ENCODE measurements at regions of chr9 and their contacts with region 1.

Region 1: DNA sequence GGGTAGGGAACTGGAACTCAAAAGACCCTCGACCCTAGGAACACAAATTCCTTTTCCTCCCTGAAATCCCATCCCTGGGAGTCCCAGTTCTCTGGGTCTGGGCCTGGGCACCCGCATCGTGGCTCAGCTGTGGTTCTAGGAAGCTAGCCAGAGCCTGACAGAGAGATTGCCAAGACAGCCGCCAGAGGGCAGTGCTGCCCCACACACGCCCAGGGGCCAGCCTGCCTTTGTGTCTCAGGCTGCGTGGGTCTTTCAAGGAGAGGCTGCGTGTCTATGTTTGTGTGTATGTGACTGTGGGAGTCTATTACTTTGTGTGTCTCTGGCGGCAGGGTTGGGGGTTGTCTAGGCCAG is 32.0 kb upstream of the TTLL11 start:
- DNase-seq: peak; percentile 17
- H3K4me3 ChIP-seq: no peak overlapping the region
- CTCF ChIP-seq: peak; percentile 93

Region 2: GRCh38 chr9:122092611-122093506 is 32.3 kb before region 1 on chr9 and contains the start of gene TTLL11:
- CTCF ChIA-PET with region 1: interaction called, 692 read pairs
- POLR2A ChIA-PET with region 1: no interaction called
- DNase-seq: peak; percentile 49
- H3K4me3 ChIP-seq: peak within 1 kb of the TSS; percentile 79
- CTCF ChIP-seq: no peak

Region 3: GRCh38 chr9:122144836-122145591 is 19.9 kb after region 1 on chr9:
- CTCF ChIA-PET with region 1: interaction called, 122 read pairs
- POLR2A ChIA-PET with region 1: interaction called, 4 read pairs
- DNase-seq: no peak
- H3K4me3 ChIP-seq: no peak overlapping the region
- CTCF ChIP-seq: peak; percentile 37

Region 4: DNA sequence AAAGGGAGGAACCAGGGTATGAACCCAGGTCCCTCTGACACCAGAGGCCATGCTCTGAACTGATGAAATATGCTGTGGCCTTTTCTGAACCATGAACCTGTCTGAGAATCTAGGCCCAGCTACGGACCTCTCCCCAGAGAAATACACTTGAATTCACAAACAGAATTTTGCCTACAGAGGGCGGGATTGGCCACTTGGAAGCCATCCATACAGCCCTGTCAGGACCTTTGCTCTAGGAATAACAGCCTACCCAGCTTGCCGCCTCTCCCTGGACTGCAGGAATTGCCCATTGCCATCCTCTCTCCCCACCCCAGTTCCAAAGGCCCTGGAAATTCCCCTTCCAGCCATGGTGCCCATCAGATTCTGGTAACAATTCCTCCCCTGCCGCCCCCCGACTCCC is 61.2 kb after region 1 on chr9:
- CTCF ChIA-PET with region 1: no interaction called
- POLR2A ChIA-PET with region 1: no interaction called
- DNase-seq: no peak
- H3K4me3 ChIP-seq: no peak overlapping the region
- CTCF ChIP-seq: no peak

Region 5: DNA sequence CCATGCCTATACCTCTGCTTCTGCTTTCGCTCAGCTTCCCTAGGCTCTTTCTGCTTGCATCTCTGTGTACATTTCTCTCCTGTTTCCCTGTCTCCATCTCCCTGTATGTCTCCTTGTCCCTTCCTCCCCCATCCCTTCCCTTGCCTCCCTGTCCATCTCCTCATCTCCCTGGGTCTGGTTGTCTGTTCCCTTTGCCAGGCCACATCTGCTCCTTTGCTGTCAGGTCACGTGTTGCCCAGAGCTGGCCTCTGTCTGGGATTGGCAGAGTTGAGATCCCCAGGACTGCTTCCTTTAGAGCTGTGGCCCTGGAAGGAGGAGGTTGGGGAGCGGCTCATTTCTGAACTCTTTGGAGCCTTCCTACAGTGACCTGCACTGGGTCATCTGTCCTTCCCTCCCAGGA is 213.9 kb after region 1 on chr9:
- CTCF ChIA-PET with region 1: interaction called, 831 read pairs
- POLR2A ChIA-PET with region 1: no interaction called
- DNase-seq: no peak
- H3K4me3 ChIP-seq: no peak overlapping the region
- CTCF ChIP-seq: no peak

Region 6: DNA sequence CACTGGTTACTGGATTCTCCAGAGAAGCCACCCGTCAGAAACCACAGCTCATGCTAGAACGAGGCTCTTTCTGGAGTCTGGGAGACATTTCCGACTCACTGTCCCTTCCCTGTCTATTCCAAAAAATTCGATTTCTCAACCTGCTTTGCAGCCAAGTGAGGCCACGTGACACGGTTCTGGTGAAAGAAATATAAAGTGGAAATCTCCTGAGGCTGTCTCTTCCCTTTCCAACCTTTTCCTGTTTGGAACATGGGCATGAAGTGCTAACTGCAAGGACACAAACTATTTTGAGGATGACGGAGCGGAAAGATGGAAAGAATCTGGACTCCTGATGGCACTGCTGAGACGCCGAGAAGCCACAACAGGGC is 239.6 kb after region 1 on chr9:
- CTCF ChIA-PET with region 1: interaction called, 25 read pairs
- POLR2A ChIA-PET with region 1: no interaction called
- DNase-seq: no peak
- H3K4me3 ChIP-seq: no peak overlapping the region
- CTCF ChIP-seq: no peak

Region 7: DNA sequence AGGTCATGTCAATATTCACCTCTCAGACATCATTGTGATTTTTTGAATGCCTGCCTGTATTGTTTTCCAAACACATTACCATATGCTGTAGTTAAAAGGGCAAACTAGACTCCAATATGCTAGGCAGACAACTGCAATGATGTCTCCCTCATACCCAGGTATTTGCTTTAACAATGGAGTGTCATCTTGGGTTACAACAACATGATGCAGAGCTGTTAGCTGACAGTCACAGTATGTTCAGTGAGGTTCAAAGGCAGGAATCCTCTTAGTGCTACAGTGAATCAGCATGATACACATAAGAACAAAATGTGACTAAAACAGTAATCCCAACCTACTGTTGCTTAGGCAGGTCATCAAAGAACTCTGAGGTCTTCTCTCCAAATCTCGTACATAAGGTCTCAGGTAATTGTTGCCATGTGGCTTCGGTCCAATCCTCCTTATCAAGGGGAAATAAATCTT is 328.6 kb after region 1 on chr9:
- CTCF ChIA-PET with region 1: interaction called, 86 read pairs
- POLR2A ChIA-PET with region 1: interaction called, 3 read pairs
- DNase-seq: no peak
- H3K4me3 ChIP-seq: no peak overlapping the region
- CTCF ChIP-seq: no peak